B cell (primary cell): ENCODE measurements at regions of chr1 and their contacts with region 1.

Region 1: GRCh38 chr1:17494114-17494729 is 45.3 kb upstream of the ARHGEF10L start:
- DNase-seq: peak; percentile 71
- ATAC-seq: peak; percentile 60
- H3K4me3 ChIP-seq: no peak overlapping the region
- H3K4me3 Mint-ChIP-seq: no peak overlapping the region
- H3K27ac ChIP-seq: no peak overlapping the region
- H3K27ac Mint-ChIP-seq: no peak overlapping the region
- H3K4me1 ChIP-seq: no peaks in the 10 kb centered on the region
- H3K4me1 Mint-ChIP-seq: no peaks in the 10 kb centered on the region
- H3K27me3 ChIP-seq: no peaks in the 10 kb centered on the region
- H3K27me3 Mint-ChIP-seq: peaks cover 10% of the 10 kb centered on the region
- CTCF ChIP-seq: peak; percentile 92

Region 2: GRCh38 chr1:17338706-17339493 is 155.3 kb before region 1 on chr1:
- CTCF ChIA-PET with region 1: no interaction called
- POLR2A ChIA-PET with region 1: no interaction called
- intact Hi-C with region 1: no loop called
- DNase-seq: no peak
- ATAC-seq: no peak
- H3K4me3 ChIP-seq: no peak overlapping the region
- H3K4me3 Mint-ChIP-seq: no peak overlapping the region
- H3K27ac ChIP-seq: no peak overlapping the region
- H3K27ac Mint-ChIP-seq: no peak overlapping the region
- H3K4me1 ChIP-seq: no peaks in the 10 kb centered on the region
- H3K4me1 Mint-ChIP-seq: no peaks in the 10 kb centered on the region
- H3K27me3 ChIP-seq: peaks cover 0 to 5% (median 0%) of the 10 kb centered on the region in 4 experiments
- H3K27me3 Mint-ChIP-seq: peaks cover 16% of the 10 kb centered on the region
- CTCF ChIP-seq: no peak

Region 3: DNA sequence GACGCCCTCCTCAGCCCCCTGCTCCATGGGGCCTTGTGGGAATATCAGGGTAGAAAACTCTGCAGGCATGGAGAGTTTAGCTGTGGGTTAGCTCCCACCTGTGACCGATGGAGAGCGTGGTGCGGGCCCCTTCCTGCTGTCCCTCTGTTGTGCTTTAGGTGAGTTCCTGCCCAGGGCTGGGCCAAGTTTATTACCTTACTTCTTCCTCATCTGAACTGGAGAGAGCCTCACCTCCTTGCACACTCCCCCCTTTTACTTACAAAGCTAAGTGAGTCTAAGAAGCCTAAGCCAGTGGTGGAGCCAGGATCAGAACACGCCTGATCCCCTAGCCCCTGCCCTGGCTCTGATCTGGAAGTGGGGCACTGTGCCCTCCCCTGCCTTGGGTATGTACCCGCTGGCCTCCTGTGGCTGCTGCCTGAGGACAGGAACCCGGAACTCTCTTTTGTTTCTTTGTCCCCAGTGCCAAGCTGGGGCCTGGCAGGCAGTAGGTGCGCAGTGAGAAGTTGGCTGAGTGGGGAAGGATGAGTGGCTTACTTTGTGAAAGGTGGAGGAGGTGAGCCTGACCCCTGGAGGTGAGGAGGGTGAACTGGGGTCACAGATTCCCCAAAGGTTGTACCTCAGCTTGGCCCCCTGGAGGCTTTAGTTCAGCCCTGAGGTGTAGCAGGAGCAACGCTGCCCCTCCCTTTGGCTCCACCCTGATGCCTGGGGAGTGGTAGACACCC is 78.2 kb after region 1 on chr1:
- CTCF ChIA-PET with region 1: no interaction called
- POLR2A ChIA-PET with region 1: no interaction called
- intact Hi-C with region 1: loop called (anchors 2 kb)
- DNase-seq: peak; percentile 35
- ATAC-seq: no peak
- H3K4me3 ChIP-seq: no peak overlapping the region
- H3K4me3 Mint-ChIP-seq: no peak overlapping the region
- H3K27ac ChIP-seq: no peak overlapping the region
- H3K27ac Mint-ChIP-seq: no peak overlapping the region
- H3K4me1 ChIP-seq: no peaks in the 10 kb centered on the region
- H3K4me1 Mint-ChIP-seq: no peaks in the 10 kb centered on the region
- H3K27me3 ChIP-seq: peaks cover 0 to 2% (median 0%) of the 10 kb centered on the region in 4 experiments
- H3K27me3 Mint-ChIP-seq: peaks cover 22% of the 10 kb centered on the region
- CTCF ChIP-seq: peak; percentile 20

Region 4: DNA sequence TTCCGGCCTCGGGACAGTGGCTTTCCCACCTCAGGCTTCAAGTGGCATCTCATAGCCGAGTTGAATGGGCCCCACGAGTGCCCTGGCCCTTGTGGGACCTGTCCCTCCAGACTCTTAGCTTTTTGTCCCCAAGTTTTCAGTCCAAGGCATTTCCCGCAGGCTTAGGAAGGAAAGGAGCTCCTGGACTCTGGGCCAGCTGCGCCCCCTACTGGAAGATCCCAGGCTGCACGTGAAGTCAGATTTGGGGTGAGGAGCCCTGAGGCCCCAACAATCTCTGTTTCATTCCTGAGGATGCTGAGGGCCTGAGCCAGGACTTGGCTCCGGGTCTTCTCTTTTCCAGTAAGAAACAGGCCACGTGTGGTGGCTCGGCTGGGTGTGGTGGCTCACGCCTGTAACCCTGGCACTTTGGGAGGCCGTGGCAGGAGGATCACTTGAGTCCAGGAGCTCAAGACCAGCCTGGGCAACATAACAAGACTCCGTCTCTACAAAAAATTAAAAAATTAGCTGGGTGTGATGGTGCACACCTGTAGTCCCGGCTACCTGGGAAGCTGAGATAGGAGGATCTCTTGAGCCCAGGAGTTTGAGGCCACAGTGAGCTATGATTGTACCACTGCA is 112.7 kb after region 1 on chr1:
- CTCF ChIA-PET with region 1: interaction called, 30 read pairs
- POLR2A ChIA-PET with region 1: no interaction called
- intact Hi-C with region 1: loop called (anchors 1 kb)
- DNase-seq: peak; percentile 61
- ATAC-seq: no peak
- H3K4me3 ChIP-seq: no peak overlapping the region
- H3K4me3 Mint-ChIP-seq: no peak overlapping the region
- H3K27ac ChIP-seq: no peak overlapping the region
- H3K27ac Mint-ChIP-seq: no peak overlapping the region
- H3K4me1 ChIP-seq: no peaks in the 10 kb centered on the region
- H3K4me1 Mint-ChIP-seq: no peaks in the 10 kb centered on the region
- H3K27me3 ChIP-seq: no peaks in the 10 kb centered on the region
- H3K27me3 Mint-ChIP-seq: no peaks in the 10 kb centered on the region
- CTCF ChIP-seq: peak; percentile 69